ENCODE measurements at regions of chr3 and their contacts with region 1.

Region 1: GRCh38 chr3:174002543-174002942 is 605.0 kb downstream of the NLGN1 start:
- DNase-seq: peak; percentile 50
- ATAC-seq: no peak
- H3K4me3 ChIP-seq: no peak overlapping the region
- H3K27ac ChIP-seq: no peak overlapping the region
- H3K4me1 ChIP-seq: no peaks in the 10 kb centered on the region
- H3K27me3 ChIP-seq: no peaks in the 10 kb centered on the region
- CTCF ChIP-seq: peak; percentile 63

Region 2: GRCh38 chr3:173411375-173411973 is 591.1 kb before region 1 on chr3:
- CTCF ChIA-PET with region 1: interaction called, 3 read pairs
- POLR2A ChIA-PET with region 1: no interaction called
- intact Hi-C with region 1: loop called (anchors 10 kb)
- DNase-seq: peak; percentile 61
- ATAC-seq: peak; percentile 76
- H3K4me3 ChIP-seq: no peak overlapping the region
- H3K27ac ChIP-seq: no peak overlapping the region
- H3K4me1 ChIP-seq: no peaks in the 10 kb centered on the region
- H3K27me3 ChIP-seq: peaks cover 26% of the 10 kb centered on the region; the same call in 1 of the 2 replicates
- CTCF ChIP-seq: peak; percentile 72

Region 3: GRCh38 chr3:173584093-173584837 is 418.3 kb before region 1 on chr3:
- CTCF ChIA-PET with region 1: no interaction called
- POLR2A ChIA-PET with region 1: no interaction called
- intact Hi-C with region 1: loop called (anchors 1 kb)
- DNase-seq: peak; percentile 60
- ATAC-seq: no peak; the same call in 1 of the 2 replicates
- H3K4me3 ChIP-seq: peak overlapping the region; percentile 65
- H3K27ac ChIP-seq: no peak overlapping the region
- H3K4me1 ChIP-seq: no peaks in the 10 kb centered on the region
- H3K27me3 ChIP-seq: peaks cover 34% of the 10 kb centered on the region
- CTCF ChIP-seq: peak; percentile 67

Region 4: GRCh38 chr3:173733029-173733652 is 269.4 kb before region 1 on chr3:
- CTCF ChIA-PET with region 1: no interaction called
- POLR2A ChIA-PET with region 1: no interaction called
- intact Hi-C with region 1: loop called (anchors 2 kb)
- DNase-seq: peak; percentile 49
- ATAC-seq: no peak
- H3K4me3 ChIP-seq: no peak overlapping the region
- H3K27ac ChIP-seq: no peak overlapping the region
- H3K4me1 ChIP-seq: no peaks in the 10 kb centered on the region
- H3K27me3 ChIP-seq: no peaks in the 10 kb centered on the region
- CTCF ChIP-seq: peak; percentile 65